Ovary (tissue), 10 donors: ENCODE measurements at regions of chr14 and their contacts with region 1.

Region 1: GRCh38 chr14:23631702-23632460 is 4.3 kb upstream of the DHRS2 start:
- DNase-seq: peak; percentile 85 to 91 (median 89)
- H3K4me3 ChIP-seq: no peak overlapping the region
- H3K27ac ChIP-seq: peak overlapping the region; percentile 11 to 72
- H3K4me1 ChIP-seq: peaks cover 14% of the 10 kb centered on the region
- H3K27me3 ChIP-seq: no peaks in the 10 kb centered on the region
- CTCF ChIP-seq: peak; percentile 76 to 93 (median 91)
- EP300 ChIP-seq: no peak
- POLR2A ChIP-seq: no peak

Region 2: GRCh38 chr14:23694085-23694975 is 62.4 kb after region 1 on chr14:
- intact Hi-C with region 1: loop called in 1 of 4 experiments (anchors 10 kb)
- DNase-seq: peak in 3 of 5 donors; percentile 31 to 55 (median 34)
- H3K4me3 ChIP-seq: no peak overlapping the region
- H3K27ac ChIP-seq: peak overlapping the region in 1 of 2 donors; percentile 82
- H3K4me1 ChIP-seq: peaks cover 25% of the 10 kb centered on the region
- H3K27me3 ChIP-seq: no peaks in the 10 kb centered on the region
- CTCF ChIP-seq: no peak
- EP300 ChIP-seq: no peak
- POLR2A ChIP-seq: no peak

Region 3: DNA sequence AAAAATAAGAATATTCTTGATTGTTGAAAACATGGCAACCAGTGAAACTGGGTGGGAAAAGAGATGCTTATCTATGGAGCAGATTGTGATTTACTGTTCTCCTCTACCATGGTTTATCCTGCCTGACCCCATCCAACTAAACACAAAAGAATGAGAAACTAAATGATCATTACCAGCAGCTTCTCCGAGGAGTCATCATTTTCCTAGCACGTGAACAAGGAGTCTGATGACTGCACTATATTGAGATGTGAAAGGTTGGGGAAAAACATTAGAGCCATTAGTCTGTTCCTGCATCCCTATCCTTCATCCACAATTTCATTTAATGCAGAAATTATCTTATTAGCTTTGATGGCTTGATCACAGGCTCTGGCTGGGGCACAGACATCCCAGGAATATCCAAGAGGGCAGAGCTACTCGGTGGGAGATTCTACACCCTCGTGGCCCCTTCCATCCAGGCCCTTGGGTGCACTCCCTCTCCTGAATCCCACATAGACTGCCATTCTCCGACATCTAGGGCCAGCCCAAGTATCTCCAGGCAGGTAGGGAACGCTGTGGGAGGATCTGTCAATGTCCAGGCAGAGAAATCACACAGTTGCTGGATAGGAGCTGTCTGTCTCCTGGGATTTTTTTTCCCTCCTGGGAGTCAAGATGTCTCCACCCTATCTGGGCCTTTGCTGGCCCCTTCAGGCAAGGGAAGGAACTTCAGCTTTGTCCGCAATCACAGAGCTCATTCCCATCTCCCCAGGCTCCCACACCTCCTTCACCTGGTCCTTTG is 278.4 kb after region 1 on chr14:
- intact Hi-C with region 1: loop called in 1 of 4 experiments (anchors 10 kb)
- DNase-seq: peak in 3 of 5 donors; percentile 34 to 52 (median 45)
- H3K4me3 ChIP-seq: no peak overlapping the region
- H3K27ac ChIP-seq: no peak overlapping the region
- H3K4me1 ChIP-seq: no peaks in the 10 kb centered on the region
- H3K27me3 ChIP-seq: no peaks in the 10 kb centered on the region
- CTCF ChIP-seq: peak in 1 of 3 donors; percentile 45
- EP300 ChIP-seq: no peak
- POLR2A ChIP-seq: no peak

Region 4: GRCh38 chr14:23929822-23930294 is 298.0 kb after region 1 on chr14:
- intact Hi-C with region 1: loop called in 2 of 4 experiments (anchors 2 to 10 kb)
- DNase-seq: peak; percentile 74 to 87 (median 81)
- H3K4me3 ChIP-seq: no peak overlapping the region
- H3K27ac ChIP-seq: no peak overlapping the region
- H3K4me1 ChIP-seq: peaks cover 12% of the 10 kb centered on the region
- H3K27me3 ChIP-seq: no peaks in the 10 kb centered on the region
- CTCF ChIP-seq: peak; percentile 47 to 76 (median 56)
- EP300 ChIP-seq: no peak
- POLR2A ChIP-seq: no peak